CD8-positive, alpha-beta T cell (primary cell): ENCODE measurements at regions of chr12 and their contacts with region 1.

Region 1: GRCh38 chr12:64610149-64610678 is at the start of gene RASSF3:
- DNase-seq: peak; percentile 39 to 90 (median 78)
- ATAC-seq: peak; percentile 62
- H3K4me3 ChIP-seq: peak within 1 kb of the TSS; percentile 96
- H3K4me3 Mint-ChIP-seq: peak within 1 kb of the TSS; percentile 90
- H3K27ac ChIP-seq: peak within 1 kb of the TSS; percentile 58 to 82
- H3K27ac Mint-ChIP-seq: peak within 1 kb of the TSS; percentile 96
- H3K4me1 ChIP-seq: peaks cover 21% of the 10 kb centered on the region
- H3K4me1 Mint-ChIP-seq: peaks cover 34% of the 10 kb centered on the region
- H3K27me3 ChIP-seq: no peaks in the 10 kb centered on the region
- H3K27me3 Mint-ChIP-seq: no peaks in the 10 kb centered on the region
- CTCF ChIP-seq: no peak
- total RNA-seq, gene RASSF3: 109 to 118 TPM

Region 2: GRCh38 chr12:64222009-64222765 is 388.0 kb before region 1 on chr12 and contains the start of gene KICS2:
- CTCF ChIA-PET with region 1: no interaction called
- POLR2A ChIA-PET with region 1: no interaction called
- intact Hi-C with region 1: loop called in 1 of 2 experiments (anchors 1 kb)
- DNase-seq: peak; percentile 82 to 97 (median 90)
- ATAC-seq: peak; percentile 82
- H3K4me3 ChIP-seq: peak within 1 kb of the TSS; percentile 67 to 94
- H3K4me3 Mint-ChIP-seq: peak within 1 kb of the TSS; percentile 93
- H3K27ac ChIP-seq: peak within 1 kb of the TSS; percentile 95 to 97
- H3K27ac Mint-ChIP-seq: peak within 1 kb of the TSS; percentile 98
- H3K4me1 ChIP-seq: peaks cover 12% of the 10 kb centered on the region
- H3K4me1 Mint-ChIP-seq: peaks cover 39% of the 10 kb centered on the region
- H3K27me3 ChIP-seq: no peaks in the 10 kb centered on the region
- H3K27me3 Mint-ChIP-seq: peaks cover 8% of the 10 kb centered on the region
- CTCF ChIP-seq: no peak
- total RNA-seq, gene KICS2: 13.9 to 15.5 TPM

Region 3: GRCh38 chr12:64551698-64552097 is 58.5 kb before region 1 on chr12:
- CTCF ChIA-PET with region 1: interaction called, 19 read pairs
- POLR2A ChIA-PET with region 1: interaction called, 6 read pairs
- intact Hi-C with region 1: loop called (anchors 1 to 2 kb)
- DNase-seq: no peak
- ATAC-seq: no peak
- H3K4me3 ChIP-seq: no peak overlapping the region
- H3K4me3 Mint-ChIP-seq: no peak overlapping the region
- H3K27ac ChIP-seq: no peak overlapping the region
- H3K27ac Mint-ChIP-seq: no peak overlapping the region
- H3K4me1 ChIP-seq: no peaks in the 10 kb centered on the region
- H3K4me1 Mint-ChIP-seq: peaks cover 8% of the 10 kb centered on the region
- H3K27me3 ChIP-seq: no peaks in the 10 kb centered on the region
- H3K27me3 Mint-ChIP-seq: no peaks in the 10 kb centered on the region
- CTCF ChIP-seq: no peak

Region 4: GRCh38 chr12:64633656-64634337 is 23.6 kb after region 1 on chr12:
- CTCF ChIA-PET with region 1: interaction called, 3 read pairs
- POLR2A ChIA-PET with region 1: interaction called, 3 read pairs
- intact Hi-C with region 1: loop called (anchors 2 kb)
- DNase-seq: peak in 5 of 9 experiments; percentile 33 to 58 (median 47)
- ATAC-seq: peak; percentile 51
- H3K4me3 ChIP-seq: no peak overlapping the region
- H3K4me3 Mint-ChIP-seq: peak overlapping the region; percentile 37
- H3K27ac ChIP-seq: peak overlapping the region in 1 of 2 experiments; percentile 42
- H3K27ac Mint-ChIP-seq: peak overlapping the region; percentile 73
- H3K4me1 ChIP-seq: peaks cover 85% of the 10 kb centered on the region
- H3K4me1 Mint-ChIP-seq: peaks cover 86% of the 10 kb centered on the region
- H3K27me3 ChIP-seq: no peaks in the 10 kb centered on the region
- H3K27me3 Mint-ChIP-seq: no peaks in the 10 kb centered on the region
- CTCF ChIP-seq: no peak

Region 5: DNA sequence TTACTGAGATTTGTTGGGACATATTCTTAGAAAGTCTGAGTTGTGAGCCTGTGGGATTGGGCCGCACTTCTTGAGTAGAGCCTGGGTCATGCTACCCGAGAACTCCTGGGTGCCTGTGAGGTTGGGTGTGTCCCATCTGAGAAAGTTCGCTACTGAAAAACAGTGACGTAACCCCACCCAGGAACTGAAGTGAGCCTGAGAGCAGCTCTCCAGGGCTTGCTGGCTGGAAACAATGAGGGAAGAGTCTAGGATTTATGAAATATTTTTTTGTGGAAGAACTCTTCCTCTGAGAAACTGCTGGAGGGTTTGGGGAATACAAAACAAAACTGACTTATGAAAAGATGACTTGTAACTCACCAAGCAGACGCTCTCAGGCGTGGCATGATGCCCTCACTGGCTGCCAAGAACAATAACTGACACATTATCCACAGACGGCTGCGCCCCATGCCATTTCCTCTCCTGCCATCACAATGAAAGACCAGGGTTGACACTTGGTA is 69.3 kb after region 1 on chr12:
- CTCF ChIA-PET with region 1: interaction called, 12 read pairs
- POLR2A ChIA-PET with region 1: interaction called, 32 read pairs
- intact Hi-C with region 1: loop called (anchors 2 kb)
- DNase-seq: peak; percentile 54 to 91 (median 76)
- ATAC-seq: peak; percentile 68
- H3K4me3 ChIP-seq: peak overlapping the region; percentile 22 to 33
- H3K4me3 Mint-ChIP-seq: peak overlapping the region; percentile 67
- H3K27ac ChIP-seq: peak overlapping the region; percentile 71 to 94
- H3K27ac Mint-ChIP-seq: peak overlapping the region; percentile 98
- H3K4me1 ChIP-seq: peaks cover 97% of the 10 kb centered on the region
- H3K4me1 Mint-ChIP-seq: peaks cover 92% of the 10 kb centered on the region
- H3K27me3 ChIP-seq: no peaks in the 10 kb centered on the region
- H3K27me3 Mint-ChIP-seq: no peaks in the 10 kb centered on the region
- CTCF ChIP-seq: no peak

Region 6: DNA sequence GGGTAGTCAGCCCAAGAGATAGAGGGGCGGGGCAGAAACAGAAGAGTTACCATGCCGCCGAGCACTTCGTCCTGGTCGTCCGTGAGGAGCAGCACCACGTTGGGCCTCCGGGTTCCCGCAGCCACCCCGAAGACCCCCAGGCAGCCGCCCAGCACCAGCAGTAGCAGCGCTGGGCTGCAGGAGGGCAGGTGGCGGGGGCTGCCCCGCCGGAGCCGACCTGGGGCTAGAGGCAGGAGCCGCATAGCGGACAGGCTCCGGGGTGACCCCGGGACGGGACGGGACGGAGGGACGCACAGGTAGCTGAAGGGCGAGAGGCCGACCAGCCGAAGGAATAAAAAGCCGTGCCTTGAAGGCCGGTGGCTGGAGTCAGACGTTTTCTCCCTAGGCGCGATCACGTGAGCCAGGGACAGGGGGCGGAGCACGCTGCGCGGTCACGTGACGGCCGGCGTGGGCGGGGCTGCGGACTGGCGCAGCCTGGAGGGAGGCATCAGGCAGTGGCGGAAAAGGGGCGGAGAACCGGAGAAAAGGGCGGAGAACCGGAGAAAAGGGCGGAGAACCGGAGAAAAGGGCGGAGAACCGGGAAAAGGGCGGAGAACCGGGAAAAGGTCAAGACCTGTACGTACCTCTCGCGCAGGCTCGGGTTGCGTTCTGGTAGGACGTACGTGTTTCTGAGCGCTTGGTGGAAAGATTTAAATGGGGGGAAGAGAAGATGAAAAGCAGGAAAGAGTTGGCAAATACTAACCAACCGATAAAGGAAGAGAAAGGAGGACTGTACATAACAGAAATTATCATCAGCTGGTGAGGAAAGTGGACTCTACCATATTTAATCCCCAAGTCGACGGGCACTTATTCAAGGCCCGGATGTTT is 149.1 kb after region 1 on chr12 and contains the start of gene GNS:
- CTCF ChIA-PET with region 1: no interaction called
- POLR2A ChIA-PET with region 1: no interaction called
- intact Hi-C with region 1: loop called (anchors 5 kb)
- DNase-seq: peak; percentile 81 to 95 (median 92)
- ATAC-seq: peak; percentile 86
- H3K4me3 ChIP-seq: peak within 1 kb of the TSS; percentile 70 to 80
- H3K4me3 Mint-ChIP-seq: peak within 1 kb of the TSS; percentile 97
- H3K27ac ChIP-seq: peak within 1 kb of the TSS; percentile 44 to 80
- H3K27ac Mint-ChIP-seq: peak within 1 kb of the TSS; percentile 93
- H3K4me1 ChIP-seq: peaks cover 24% of the 10 kb centered on the region
- H3K4me1 Mint-ChIP-seq: peaks cover 57% of the 10 kb centered on the region
- H3K27me3 ChIP-seq: no peaks in the 10 kb centered on the region
- H3K27me3 Mint-ChIP-seq: no peaks in the 10 kb centered on the region
- CTCF ChIP-seq: no peak
- total RNA-seq, gene GNS: 6.3 to 7.7 TPM

Region 7: GRCh38 chr12:64840949-64841717 is 230.9 kb after region 1 on chr12:
- CTCF ChIA-PET with region 1: no interaction called
- POLR2A ChIA-PET with region 1: no interaction called
- intact Hi-C with region 1: no loop called
- DNase-seq: no peak
- ATAC-seq: no peak
- H3K4me3 ChIP-seq: no peak overlapping the region
- H3K4me3 Mint-ChIP-seq: no peak overlapping the region
- H3K27ac ChIP-seq: no peak overlapping the region
- H3K27ac Mint-ChIP-seq: no peak overlapping the region
- H3K4me1 ChIP-seq: no peaks in the 10 kb centered on the region
- H3K4me1 Mint-ChIP-seq: no peaks in the 10 kb centered on the region
- H3K27me3 ChIP-seq: no peaks in the 10 kb centered on the region
- H3K27me3 Mint-ChIP-seq: peaks cover 2% of the 10 kb centered on the region
- CTCF ChIP-seq: no peak